ENCODE measurements at regions of chr3 and their contacts with region 1.

Region 1: GRCh38 chr3:31544634-31545033 is 11.9 kb downstream of the STT3B start:
- DNase-seq: no peak
- ATAC-seq: no peak
- H3K4me3 Mint-ChIP-seq: no peak overlapping the region
- H3K27ac Mint-ChIP-seq: no peak overlapping the region
- H3K4me1 Mint-ChIP-seq: peaks cover 70% of the 10 kb centered on the region
- H3K27me3 Mint-ChIP-seq: no peaks in the 10 kb centered on the region
- CTCF ChIP-seq: no peak

Region 2: GRCh38 chr3:31952205-31952604 is 407.6 kb after region 1 on chr3:
- CTCF ChIA-PET with region 1: no interaction called
- POLR2A ChIA-PET with region 1: interaction called, 11 read pairs
- intact Hi-C with region 1: no loop called
- DNase-seq: peak; percentile 61
- ATAC-seq: peak; percentile 82
- H3K4me3 Mint-ChIP-seq: peak overlapping the region; percentile 75
- H3K27ac Mint-ChIP-seq: peak overlapping the region; percentile 96
- H3K4me1 Mint-ChIP-seq: peaks cover 91% of the 10 kb centered on the region
- H3K27me3 Mint-ChIP-seq: no peaks in the 10 kb centered on the region
- CTCF ChIP-seq: no peak

Region 3: DNA sequence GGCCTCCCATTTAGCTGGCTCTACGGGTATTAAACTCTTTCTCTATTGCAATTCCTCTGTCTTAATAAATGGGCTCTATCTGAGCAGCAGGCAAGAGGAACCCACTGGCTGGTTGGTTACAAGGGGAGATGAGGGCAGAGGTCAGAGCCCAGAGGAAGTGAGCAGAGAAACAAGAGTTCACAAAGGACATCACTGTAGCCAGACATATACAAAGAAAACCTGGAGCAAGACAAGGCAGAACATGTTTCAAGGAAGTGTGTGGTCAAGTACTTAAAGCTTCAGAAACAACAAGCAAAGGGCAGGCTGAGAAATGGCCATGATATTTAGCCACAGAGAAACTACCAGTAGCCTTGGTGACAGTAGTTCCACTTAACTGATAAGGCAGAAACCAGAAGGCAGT is 1649.7 kb after region 1 on chr3:
- CTCF ChIA-PET with region 1: no interaction called
- POLR2A ChIA-PET with region 1: no interaction called
- intact Hi-C with region 1: no loop called
- DNase-seq: no peak
- ATAC-seq: no peak
- H3K4me3 Mint-ChIP-seq: no peak overlapping the region
- H3K27ac Mint-ChIP-seq: no peak overlapping the region
- H3K4me1 Mint-ChIP-seq: no peaks in the 10 kb centered on the region
- H3K27me3 Mint-ChIP-seq: no peaks in the 10 kb centered on the region
- CTCF ChIP-seq: no peak